ENCODE measurements at regions of chr7 and their contacts with region 1.

Region 1: DNA sequence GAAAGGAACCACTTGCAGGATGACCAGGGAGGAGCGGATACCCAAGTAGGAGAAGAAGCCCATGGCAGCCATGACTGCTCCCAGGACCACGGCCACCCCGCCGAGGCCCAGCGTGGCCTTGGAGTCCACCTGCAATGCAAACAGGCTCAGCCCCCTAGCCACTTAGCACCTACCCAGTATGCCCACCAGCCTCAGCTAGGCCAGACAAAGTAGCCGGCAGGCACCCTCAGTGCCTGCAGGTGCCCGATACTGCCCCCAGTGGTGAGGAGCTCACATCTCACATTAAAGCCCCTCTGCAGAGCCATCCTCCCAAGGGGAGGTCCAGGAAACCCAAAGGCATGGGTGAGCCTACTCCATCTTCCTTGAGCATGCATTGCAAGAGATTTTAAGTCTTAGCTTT is 6.6 kb downstream of the NPC1L1 start:
- DNase-seq: peak; percentile 86
- CTCF ChIP-seq: peak; percentile 44

Region 2: DNA sequence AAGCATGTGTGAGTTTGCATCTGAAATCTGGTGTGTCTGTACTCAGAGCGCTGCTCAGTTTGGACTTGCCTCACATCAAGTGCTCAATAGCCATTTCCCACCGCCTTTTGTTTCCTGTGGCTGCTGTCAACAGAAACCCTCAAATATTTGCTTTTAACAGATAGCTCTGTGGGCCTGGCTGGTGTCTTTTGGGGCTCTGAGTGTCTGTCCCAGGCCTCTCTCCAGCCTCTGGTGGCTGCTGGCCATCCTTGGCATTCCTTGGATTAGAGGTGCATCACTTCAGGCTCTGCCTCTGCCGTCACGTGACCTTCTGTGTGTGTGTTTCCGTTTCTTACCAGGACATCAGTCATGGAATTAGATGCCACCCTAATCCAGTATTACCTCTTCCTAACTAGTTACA is 324.4 kb before region 1 on chr7:
- CTCF ChIA-PET with region 1: no interaction called
- POLR2A ChIA-PET with region 1: no interaction called
- DNase-seq: no peak
- CTCF ChIP-seq: no peak

Region 3: DNA sequence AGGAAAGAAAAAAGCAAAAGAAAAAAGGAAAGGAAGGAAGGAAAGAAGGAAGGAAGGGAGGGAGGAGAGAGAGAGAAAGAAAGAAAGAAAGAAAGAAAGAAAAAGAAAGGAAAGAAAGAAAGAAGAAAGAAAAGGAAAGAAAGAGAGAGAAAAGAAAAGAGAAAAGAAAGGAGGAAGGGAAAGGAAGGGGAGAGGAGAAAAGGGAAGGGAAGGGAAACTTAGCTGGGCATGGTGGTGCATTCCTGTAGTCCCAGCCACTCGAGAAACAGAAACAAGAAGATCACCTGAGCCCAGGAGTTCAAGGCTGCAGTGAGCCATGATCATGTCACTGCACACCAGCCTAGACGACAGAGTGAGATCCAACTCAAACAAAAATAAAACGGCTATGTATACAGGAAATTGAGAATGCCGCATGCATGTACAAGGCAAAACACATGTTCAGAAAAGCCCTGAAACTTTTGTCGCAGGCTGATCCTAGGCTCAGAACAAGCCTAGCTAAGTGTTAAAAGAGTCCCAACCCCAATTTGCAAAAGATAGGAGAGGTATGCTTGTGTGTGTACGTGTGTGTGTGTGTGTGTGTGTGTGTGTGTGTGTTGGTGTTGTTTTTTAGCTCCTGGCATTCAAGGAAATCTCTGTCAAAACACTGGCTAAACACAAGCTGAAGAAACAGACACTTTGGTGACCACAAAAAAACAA is 13.2 kb after region 1 on chr7:
- CTCF ChIA-PET with region 1: interaction called, 53 read pairs
- POLR2A ChIA-PET with region 1: no interaction called
- DNase-seq: no peak
- CTCF ChIP-seq: no peak

Region 4: GRCh38 chr7:44797329-44798251 is 263.1 kb after region 1 on chr7:
- CTCF ChIA-PET with region 1: no interaction called
- POLR2A ChIA-PET with region 1: no interaction called
- DNase-seq: peak; percentile 79
- CTCF ChIP-seq: peak; percentile 59